ENCODE measurements at regions of chr9 and their contacts with region 1.

Region 1: GRCh38 chr9:88741335-88741734 is 206.4 kb downstream of the NXNL2 start:
- DNase-seq: peak; percentile 48
- ATAC-seq: no peak
- H3K4me3 Mint-ChIP-seq: no peak overlapping the region
- H3K27ac Mint-ChIP-seq: no peak overlapping the region
- H3K4me1 Mint-ChIP-seq: no peaks in the 10 kb centered on the region
- H3K27me3 Mint-ChIP-seq: peaks cover 33% of the 10 kb centered on the region

Region 2: DNA sequence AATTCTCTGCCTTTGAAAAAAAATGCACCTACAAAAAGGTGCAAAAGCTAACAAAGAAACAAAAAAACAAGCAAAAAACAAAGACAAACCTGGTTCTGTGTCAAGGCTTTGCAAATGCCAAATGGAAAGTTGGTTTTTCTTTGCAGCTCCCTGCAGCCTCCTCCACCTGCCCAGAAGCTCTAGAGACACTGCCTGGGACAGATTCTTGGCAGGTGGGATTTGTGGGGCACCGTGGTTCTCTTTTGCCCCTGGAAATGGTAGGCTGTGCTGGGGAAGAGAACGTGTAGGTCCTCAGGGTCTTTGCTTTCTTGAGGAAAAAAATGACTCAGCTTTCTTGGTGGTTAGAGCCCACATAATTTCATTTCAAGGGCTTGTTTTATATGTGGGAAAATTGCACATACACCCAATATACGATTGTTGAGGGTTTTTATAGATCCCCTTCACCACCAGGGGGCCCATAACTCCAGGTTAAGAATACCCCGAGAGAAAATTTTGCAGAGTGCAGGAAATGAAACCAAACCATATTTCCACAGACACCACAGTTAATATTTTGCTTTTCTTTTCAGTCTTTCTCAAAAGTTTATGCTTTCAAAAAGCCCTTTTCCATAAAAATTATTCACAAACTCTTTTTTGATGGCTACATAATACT is 147.7 kb before region 1 on chr9:
- CTCF ChIA-PET with region 1: no interaction called
- POLR2A ChIA-PET with region 1: no interaction called
- intact Hi-C with region 1: loop called (anchors 1 kb)
- DNase-seq: peak; percentile 71
- ATAC-seq: peak; percentile 66
- H3K4me3 Mint-ChIP-seq: no peak overlapping the region
- H3K27ac Mint-ChIP-seq: no peak overlapping the region
- H3K4me1 Mint-ChIP-seq: peaks cover 6% of the 10 kb centered on the region
- H3K27me3 Mint-ChIP-seq: peaks cover 13% of the 10 kb centered on the region

Region 3: DNA sequence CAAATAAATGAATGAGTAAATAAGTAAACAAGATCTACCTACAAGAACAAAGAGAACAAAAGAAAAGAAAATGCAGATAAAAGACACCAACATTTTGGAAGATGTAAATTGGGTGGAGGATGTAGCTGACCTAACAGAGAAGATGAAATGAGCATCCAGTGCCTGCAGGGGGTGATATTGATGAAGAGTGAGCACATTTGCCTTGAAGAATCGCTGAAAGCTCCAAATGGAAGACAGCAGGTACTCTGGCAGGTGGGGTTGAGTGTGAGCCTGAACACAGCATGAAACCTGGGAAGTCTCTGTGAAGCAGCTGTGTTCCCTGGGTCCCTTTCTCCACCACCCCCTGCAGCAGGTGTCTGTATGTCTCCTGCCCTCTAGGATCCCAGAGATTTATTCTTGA is 80.7 kb before region 1 on chr9:
- CTCF ChIA-PET with region 1: no interaction called
- POLR2A ChIA-PET with region 1: no interaction called
- intact Hi-C with region 1: loop called in 1 of 2 experiments (anchors 5 kb)
- DNase-seq: peak; percentile 38
- ATAC-seq: no peak
- H3K4me3 Mint-ChIP-seq: no peak overlapping the region
- H3K27ac Mint-ChIP-seq: no peak overlapping the region
- H3K4me1 Mint-ChIP-seq: no peaks in the 10 kb centered on the region
- H3K27me3 Mint-ChIP-seq: peaks cover 8% of the 10 kb centered on the region

Region 4: DNA sequence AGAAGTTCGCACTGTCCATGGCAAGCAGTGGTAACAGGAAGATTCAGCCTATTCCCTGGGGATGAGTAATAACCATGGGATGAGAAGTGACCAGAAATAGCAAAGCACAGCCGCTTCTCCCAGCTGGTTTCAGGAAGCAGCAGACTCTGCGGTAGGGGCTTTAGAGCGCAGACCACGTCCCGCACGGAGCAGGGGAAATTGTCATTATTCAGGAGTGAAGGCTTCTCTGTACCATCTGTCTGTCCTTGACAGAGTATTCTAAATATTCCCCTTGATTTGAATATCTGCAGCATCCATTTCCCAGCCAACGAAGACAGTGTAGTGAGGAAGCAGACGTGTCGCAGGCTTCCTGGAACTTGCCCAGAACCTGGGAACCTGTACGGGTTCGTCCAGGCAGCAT is 46.7 kb before region 1 on chr9:
- CTCF ChIA-PET with region 1: no interaction called
- POLR2A ChIA-PET with region 1: no interaction called
- intact Hi-C with region 1: no loop called
- DNase-seq: no peak
- ATAC-seq: no peak
- H3K4me3 Mint-ChIP-seq: no peak overlapping the region
- H3K27ac Mint-ChIP-seq: no peak overlapping the region
- H3K4me1 Mint-ChIP-seq: no peaks in the 10 kb centered on the region
- H3K27me3 Mint-ChIP-seq: peaks cover 13% of the 10 kb centered on the region